Panc1 (cell line): ENCODE measurements at regions of chr19 and their contacts with region 1.

Region 1: DNA sequence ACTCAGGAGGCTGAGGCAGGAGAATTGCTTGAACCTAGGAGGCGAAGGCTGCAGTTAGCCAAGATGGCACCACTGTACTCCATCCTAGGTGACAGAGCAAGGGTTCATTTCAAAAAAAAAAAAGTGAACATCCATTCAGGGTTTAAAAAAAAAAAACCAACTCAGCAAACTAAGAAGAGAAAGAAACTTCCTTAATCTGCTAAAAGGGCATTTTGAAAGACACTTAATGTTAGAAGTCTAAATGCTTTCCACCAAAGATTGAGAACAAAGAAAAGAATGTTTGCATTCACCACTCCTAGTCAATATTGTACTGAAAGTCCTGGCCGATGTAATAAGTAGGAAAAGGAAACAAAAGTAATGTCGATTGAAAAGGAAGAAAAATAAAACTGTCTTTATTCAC is 7.1 kb upstream of the PSMC4 start:
- DNase-seq: no peak
- ATAC-seq: no peak
- H3K4me3 ChIP-seq: no peak overlapping the region
- H3K27ac ChIP-seq: no peak overlapping the region
- H3K4me1 ChIP-seq: no peaks in the 10 kb centered on the region
- H3K27me3 ChIP-seq: no peaks in the 10 kb centered on the region
- CTCF ChIP-seq: no peak

Region 2: GRCh38 chr19:40013991-40014390 is 50.1 kb after region 1 on chr19:
- CTCF ChIA-PET with region 1: no interaction called
- POLR2A ChIA-PET with region 1: interaction called, 11 read pairs
- in situ Hi-C with region 1: no loop called
- intact Hi-C with region 1: no loop called
- DNase-seq: no peak
- ATAC-seq: no peak
- H3K4me3 ChIP-seq: no peak overlapping the region
- H3K27ac ChIP-seq: no peak overlapping the region
- H3K4me1 ChIP-seq: no peaks in the 10 kb centered on the region
- H3K27me3 ChIP-seq: no peaks in the 10 kb centered on the region
- CTCF ChIP-seq: no peak